Spleen (tissue), 13 donors: ENCODE measurements at regions of chr4 and their contacts with region 1.

Region 1: DNA sequence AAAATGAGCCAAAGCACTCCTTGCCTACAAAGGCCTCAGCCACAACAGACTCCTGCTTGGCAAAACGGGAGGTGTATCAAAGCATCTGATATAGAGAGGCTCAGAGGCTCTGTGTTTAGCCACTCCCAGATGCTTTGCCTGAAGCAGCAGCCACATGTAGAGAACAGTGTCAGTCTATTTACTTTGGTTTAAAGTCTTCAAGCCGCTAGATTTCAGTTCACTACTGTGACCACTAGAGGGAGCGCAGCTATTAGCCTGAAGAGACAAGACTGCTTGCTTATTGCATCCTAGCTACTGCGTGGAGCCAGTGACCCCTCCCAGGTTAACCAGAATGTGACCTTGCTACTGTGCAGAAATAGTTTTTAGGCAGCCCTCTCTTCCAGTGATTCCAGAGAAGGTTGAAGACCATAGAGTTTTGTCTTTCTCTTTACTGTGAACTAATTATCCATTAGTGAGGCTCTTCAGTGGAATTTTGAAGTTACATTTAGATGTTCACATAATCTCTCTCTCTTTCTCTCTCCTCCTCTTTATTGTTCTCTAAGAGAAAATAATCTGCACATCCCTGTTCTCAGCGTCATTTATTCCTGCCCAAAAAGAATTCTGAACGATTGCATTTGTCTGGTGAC is 39.3 kb downstream of the BMP3 start:
- DNase-seq: no peak
- H3K4me3 ChIP-seq: no peak overlapping the region
- H3K27ac ChIP-seq: no peak overlapping the region
- H3K4me1 ChIP-seq: no peaks in the 10 kb centered on the region
- H3K27me3 ChIP-seq: peaks cover 0 to 3% (median 0%) of the 10 kb centered on the region in 7 donors
- CTCF ChIP-seq: peak; percentile 24 to 83 (median 76)
- POLR2A ChIP-seq: no peak

Region 2: GRCh38 chr4:80631861-80632260 is 438.0 kb before region 1 on chr4:
- intact Hi-C with region 1: no loop called
- DNase-seq: no peak
- H3K4me3 ChIP-seq: no peak overlapping the region
- H3K27ac ChIP-seq: no peak overlapping the region
- H3K4me1 ChIP-seq: no peaks in the 10 kb centered on the region
- H3K27me3 ChIP-seq: no peaks in the 10 kb centered on the region
- CTCF ChIP-seq: no peak
- POLR2A ChIP-seq: no peak

Region 3: GRCh38 chr4:81351654-81352445 is 282.0 kb after region 1 on chr4:
- intact Hi-C with region 1: loop called (anchors 10 kb)
- DNase-seq: peak; percentile 78
- H3K4me3 ChIP-seq: no peak overlapping the region
- H3K27ac ChIP-seq: no peak overlapping the region
- H3K4me1 ChIP-seq: no peaks in the 10 kb centered on the region
- H3K27me3 ChIP-seq: peaks cover 0 to 6% (median 0%) of the 10 kb centered on the region in 7 donors
- CTCF ChIP-seq: peak in 9 of 11 experiments; percentile 39 to 85 (median 78)
- POLR2A ChIP-seq: no peak